ENCODE measurements at regions of chr13 and their contacts with region 1.

Region 1: DNA sequence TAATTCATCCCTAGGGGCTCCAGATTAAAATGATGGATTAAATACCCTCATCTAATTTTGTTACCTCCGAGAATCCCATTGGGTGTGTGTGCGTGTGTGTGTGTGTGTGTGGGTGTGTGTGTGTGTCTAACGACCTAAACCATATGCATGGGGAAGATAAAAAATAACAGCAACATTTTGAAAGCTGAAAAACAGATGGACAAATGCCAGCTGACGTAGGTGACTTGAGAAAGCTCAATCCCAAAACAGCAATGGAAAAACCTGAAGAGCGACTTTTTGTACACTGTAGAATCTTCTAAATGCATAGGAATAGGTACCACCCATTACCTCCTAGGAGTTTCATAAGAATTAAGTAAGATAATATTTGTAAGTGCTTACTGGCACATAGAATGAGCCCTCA is 8.7 kb upstream of the RPL21 start:
- DNase-seq: no peak
- ATAC-seq: no peak
- H3K4me3 ChIP-seq: no peak overlapping the region
- H3K27ac ChIP-seq: no peak overlapping the region
- H3K4me1 ChIP-seq: peaks cover 1% of the 10 kb centered on the region
- H3K27me3 ChIP-seq: no peaks in the 10 kb centered on the region

Region 2: DNA sequence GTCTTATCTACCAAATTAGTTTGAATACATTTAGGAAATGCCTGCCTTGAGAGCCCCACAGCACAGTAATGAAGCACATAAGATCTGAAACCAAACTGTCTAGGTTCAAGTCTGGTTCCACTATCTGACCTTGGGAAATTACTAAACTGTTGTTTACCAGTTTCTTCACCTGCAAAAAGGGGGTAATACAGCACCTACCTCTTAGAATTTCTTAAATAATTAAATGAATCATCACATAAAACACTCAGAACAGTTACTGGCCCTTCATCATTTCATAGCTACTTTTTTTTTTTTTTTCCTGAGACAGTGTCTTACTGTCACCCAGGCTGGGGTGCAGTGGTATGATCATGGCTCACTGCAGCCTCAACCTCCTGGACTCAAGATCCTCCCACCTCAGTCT is 130.7 kb before region 1 on chr13:
- intact Hi-C with region 1: no loop called
- DNase-seq: no peak
- ATAC-seq: no peak
- H3K4me3 ChIP-seq: no peak overlapping the region
- H3K27ac ChIP-seq: no peak overlapping the region
- H3K4me1 ChIP-seq: no peaks in the 10 kb centered on the region
- H3K27me3 ChIP-seq: no peaks in the 10 kb centered on the region

Region 3: GRCh38 chr13:27171827-27172494 is 70.7 kb before region 1 on chr13:
- intact Hi-C with region 1: loop called in 1 of 4 experiments (anchors 10 kb)
- DNase-seq: peak; percentile 94 to 98 (median 97)
- ATAC-seq: peak; percentile 98 to 99
- H3K4me3 ChIP-seq: peak overlapping the region; percentile 93
- H3K27ac ChIP-seq: peak overlapping the region; percentile 85
- H3K4me1 ChIP-seq: peaks cover 6% of the 10 kb centered on the region
- H3K27me3 ChIP-seq: no peaks in the 10 kb centered on the region

Region 4: DNA sequence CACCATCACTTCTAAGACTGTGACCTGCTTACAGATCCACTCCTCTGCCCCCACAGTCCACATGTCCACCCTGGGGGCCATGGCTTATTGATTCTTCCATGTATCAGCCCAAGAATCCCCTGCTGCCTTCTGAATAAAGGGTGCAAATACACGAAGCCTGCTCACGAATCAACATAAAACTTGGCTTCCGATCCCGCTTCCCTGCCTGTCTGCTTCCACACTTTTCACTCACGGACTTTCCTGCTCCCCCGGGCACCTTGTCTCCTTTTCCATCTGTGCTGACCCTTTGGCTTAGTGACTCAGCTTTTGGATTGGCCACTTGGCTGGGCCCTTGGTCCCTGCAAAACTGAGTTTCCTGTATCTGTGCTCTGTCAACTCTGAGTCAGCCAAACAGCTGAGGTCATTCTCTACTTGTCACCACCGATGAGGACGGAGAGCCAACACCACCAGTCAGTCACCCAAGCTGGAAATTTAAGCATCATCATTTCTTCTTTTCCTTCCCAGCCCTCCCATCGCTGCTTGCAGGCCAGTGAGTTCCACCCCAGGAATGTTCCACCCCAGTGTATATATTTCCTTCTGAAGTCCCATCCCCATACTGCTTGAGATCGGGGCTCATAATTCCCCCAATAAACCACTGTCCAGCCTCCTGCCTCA is 59.7 kb before region 1 on chr13:
- intact Hi-C with region 1: loop called in 2 of 4 experiments (anchors 10 kb)
- DNase-seq: peak; percentile 76 to 84 (median 78)
- ATAC-seq: peak; percentile 95 to 99
- H3K4me3 ChIP-seq: no peak overlapping the region
- H3K27ac ChIP-seq: peak overlapping the region; percentile 8
- H3K4me1 ChIP-seq: peaks cover 7% of the 10 kb centered on the region
- H3K27me3 ChIP-seq: no peaks in the 10 kb centered on the region

Region 5: DNA sequence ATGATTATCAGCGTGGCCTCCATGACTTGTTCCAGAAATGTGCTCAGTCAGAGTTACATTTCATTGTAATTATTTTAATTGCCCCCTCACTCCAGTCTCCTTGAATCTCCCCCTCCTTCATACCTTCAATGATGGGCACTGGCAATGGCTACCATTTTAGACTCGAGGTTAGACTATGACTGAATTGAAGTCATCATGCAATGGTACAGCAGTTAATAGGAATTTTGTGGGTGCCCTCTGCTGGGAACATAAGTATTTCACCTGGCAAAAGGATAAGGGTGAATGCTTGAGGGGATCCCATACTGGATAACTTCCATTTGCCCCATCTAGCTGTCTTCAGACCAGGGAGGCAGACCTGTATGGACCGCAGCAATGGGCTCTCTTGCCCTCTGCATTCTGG is 38.9 kb before region 1 on chr13:
- intact Hi-C with region 1: no loop called
- DNase-seq: no peak
- ATAC-seq: peak; percentile 47 to 49
- H3K4me3 ChIP-seq: no peak overlapping the region
- H3K27ac ChIP-seq: no peak overlapping the region
- H3K4me1 ChIP-seq: no peaks in the 10 kb centered on the region
- H3K27me3 ChIP-seq: no peaks in the 10 kb centered on the region

Region 6: DNA sequence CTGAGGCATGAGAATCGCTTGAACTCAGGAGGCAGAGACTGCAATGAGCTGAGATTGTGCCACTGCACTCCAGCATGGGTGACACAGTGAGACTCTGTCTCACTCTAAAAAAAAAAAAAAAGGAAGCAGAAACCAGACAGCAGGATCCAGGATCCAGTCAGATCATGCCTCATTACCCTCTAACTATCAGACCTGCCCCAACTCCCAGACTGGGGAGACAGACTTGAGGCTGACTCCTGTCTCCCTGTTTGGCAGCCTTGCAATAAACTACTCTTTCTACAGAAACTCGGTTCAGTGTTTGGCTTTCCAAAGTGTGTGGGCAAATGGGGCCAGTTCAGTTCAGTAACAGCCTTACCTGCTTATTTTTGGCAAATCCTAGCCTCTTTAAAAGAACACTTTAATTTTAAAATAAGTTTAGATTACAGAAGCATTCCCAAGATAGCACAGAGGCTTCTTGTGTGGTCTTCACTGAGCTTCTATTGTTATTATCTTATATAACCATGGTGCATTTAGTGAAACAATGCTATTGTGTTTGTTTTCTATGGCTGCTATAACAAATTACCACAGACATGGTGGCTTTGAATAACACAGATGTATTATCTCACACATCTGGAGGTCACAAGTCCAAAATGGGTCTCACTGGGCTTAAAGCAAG is 46.4 kb after region 1 on chr13:
- intact Hi-C with region 1: loop called in 1 of 4 experiments (anchors 5 kb)
- DNase-seq: no peak
- ATAC-seq: no peak
- H3K4me3 ChIP-seq: no peak overlapping the region
- H3K27ac ChIP-seq: no peak overlapping the region
- H3K4me1 ChIP-seq: no peaks in the 10 kb centered on the region
- H3K27me3 ChIP-seq: no peaks in the 10 kb centered on the region

Region 7: GRCh38 chr13:28185256-28185655 is 942.5 kb after region 1 on chr13:
- intact Hi-C with region 1: no loop called
- DNase-seq: no peak
- ATAC-seq: peak in 1 of 2 donors; percentile 90
- H3K4me3 ChIP-seq: no peak overlapping the region
- H3K27ac ChIP-seq: no peak overlapping the region
- H3K4me1 ChIP-seq: no peaks in the 10 kb centered on the region
- H3K27me3 ChIP-seq: no peaks in the 10 kb centered on the region

Measured in right cardiac atrium (tissue), 5 donors.